ENCODE measurements at regions of chr6 and their contacts with region 1.

Region 1: GRCh38 chr6:116570856-116571682 is at the start of gene RWDD1:
- DNase-seq: peak; percentile 91 to 99 (median 98)
- ATAC-seq: peak; percentile 98
- H3K4me3 ChIP-seq: peak within 1 kb of the TSS; percentile 86
- H3K4me3 Mint-ChIP-seq: peak within 1 kb of the TSS; percentile 94 to 99 (median 98)
- H3K27ac ChIP-seq: peak within 1 kb of the TSS; percentile 95
- H3K27ac Mint-ChIP-seq: peak within 1 kb of the TSS; percentile 96 to 100 (median 99)
- H3K4me1 ChIP-seq: peaks cover 16 to 21% of the 10 kb centered on the region in 2 donors
- H3K4me1 Mint-ChIP-seq: peaks cover 33 to 62% (median 55%) of the 10 kb centered on the region in 7 donors
- H3K27me3 ChIP-seq: no peaks in the 10 kb centered on the region
- H3K27me3 Mint-ChIP-seq: peaks cover 0 to 11% (median 0%) of the 10 kb centered on the region in 5 donors
- total RNA-seq, gene RWDD1: 33.2 to 39.9 (median 36.7) TPM

Region 2: GRCh38 chr6:116461932-116462885 is 108.9 kb before region 1 on chr6:
- CTCF ChIA-PET with region 1: no interaction called
- POLR2A ChIA-PET with region 1: interaction called, 3 read pairs
- intact Hi-C with region 1: loop called in 1 of 2 experiments (anchors 1 kb)
- DNase-seq: peak; percentile 25 to 71 (median 62)
- ATAC-seq: peak; percentile 89
- H3K4me3 ChIP-seq: peak overlapping the region; percentile 58
- H3K4me3 Mint-ChIP-seq: peak overlapping the region; percentile 76 to 87 (median 80)
- H3K27ac ChIP-seq: no peak overlapping the region
- H3K27ac Mint-ChIP-seq: peak overlapping the region in 7 of 9 donors; percentile 33 to 92 (median 76)
- H3K4me1 ChIP-seq: peaks cover 7 to 16% of the 10 kb centered on the region in 2 donors
- H3K4me1 Mint-ChIP-seq: peaks cover 17 to 88% (median 26%) of the 10 kb centered on the region in 7 donors
- H3K27me3 ChIP-seq: no peaks in the 10 kb centered on the region
- H3K27me3 Mint-ChIP-seq: peaks cover 0 to 39% (median 4%) of the 10 kb centered on the region in 5 donors

Region 3: DNA sequence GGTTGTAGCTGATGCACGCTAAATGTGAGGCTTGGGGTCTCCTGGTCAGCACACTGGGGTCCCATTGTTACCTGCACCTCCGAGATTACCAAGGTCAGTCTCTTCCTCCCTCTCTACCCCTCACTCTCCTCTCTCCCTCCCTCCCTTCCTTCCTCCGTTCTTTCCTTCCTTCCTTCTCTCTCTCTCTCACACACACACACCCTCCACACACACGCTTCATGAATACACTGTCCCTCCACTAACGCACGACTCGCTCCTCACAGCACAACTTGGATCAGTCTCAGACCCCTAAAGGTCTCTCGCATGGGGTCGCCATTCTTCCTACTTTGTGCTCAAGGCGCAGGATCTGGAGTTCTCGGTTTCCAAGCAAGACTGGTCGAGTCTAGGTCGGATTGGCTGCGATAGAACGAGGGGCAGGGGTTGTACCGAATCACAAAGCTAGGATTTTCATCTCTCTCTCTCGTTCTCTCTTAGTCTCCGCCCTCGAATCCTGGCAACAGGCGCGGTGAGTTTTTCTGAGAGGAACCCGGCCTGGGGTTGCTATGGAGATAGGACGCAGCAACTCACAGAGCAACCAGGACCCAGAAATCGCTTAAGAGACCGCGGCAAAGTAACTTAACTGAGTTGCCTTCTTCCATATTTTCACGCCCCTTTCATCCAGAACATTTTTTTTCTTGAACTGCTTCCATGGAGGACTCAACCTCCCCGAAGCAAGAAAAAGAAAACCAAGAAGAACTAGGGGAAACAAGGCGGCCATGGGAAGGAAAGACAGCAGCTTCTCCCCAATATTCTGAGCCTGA is 45.1 kb after region 1 on chr6 and contains the start of gene RSPH4A:
- CTCF ChIA-PET with region 1: no interaction called
- POLR2A ChIA-PET with region 1: interaction called, 4 read pairs
- intact Hi-C with region 1: loop called (anchors 1 kb)
- DNase-seq: peak; percentile 17 to 76 (median 61)
- ATAC-seq: peak; percentile 95
- H3K4me3 ChIP-seq: peak within 1 kb of the TSS; percentile 78
- H3K4me3 Mint-ChIP-seq: peak within 1 kb of the TSS; percentile 81 to 94 (median 86)
- H3K27ac ChIP-seq: peak within 1 kb of the TSS; percentile 28
- H3K27ac Mint-ChIP-seq: peak within 1 kb of the TSS in 8 of 9 donors; percentile 4 to 78 (median 38)
- H3K4me1 ChIP-seq: peaks cover 5 to 6% of the 10 kb centered on the region in 2 donors
- H3K4me1 Mint-ChIP-seq: peaks cover 6 to 22% (median 16%) of the 10 kb centered on the region in 7 donors
- H3K27me3 ChIP-seq: no peaks in the 10 kb centered on the region
- H3K27me3 Mint-ChIP-seq: peaks cover 0 to 54% (median 14%) of the 10 kb centered on the region in 5 donors
- total RNA-seq, gene RSPH4A: 0.53 to 1.3 (median 0.73) TPM

Region 4: DNA sequence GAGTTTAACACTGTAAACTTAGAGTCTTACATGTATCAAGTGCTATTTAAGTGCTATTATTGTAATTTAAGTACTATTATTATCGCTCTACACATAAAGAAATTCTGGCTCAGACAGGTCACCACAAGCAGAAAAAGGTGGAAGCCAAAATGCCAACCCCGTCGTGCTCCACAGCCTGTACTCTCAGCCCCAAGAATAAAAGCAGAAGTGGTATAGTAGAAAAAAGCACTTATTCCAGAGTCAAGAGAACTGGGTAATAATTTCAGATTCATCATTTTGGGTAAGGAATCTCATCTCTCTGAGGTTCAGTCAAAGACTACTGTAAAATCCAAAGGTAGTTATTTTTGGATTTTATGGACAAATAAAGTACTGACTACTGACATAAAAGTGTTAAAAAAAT is 96.6 kb after region 1 on chr6:
- CTCF ChIA-PET with region 1: no interaction called
- POLR2A ChIA-PET with region 1: interaction called, 8 read pairs
- intact Hi-C with region 1: loop called (anchors 1 kb)
- DNase-seq: no peak
- ATAC-seq: no peak
- H3K4me3 ChIP-seq: peak overlapping the region; percentile 92
- H3K4me3 Mint-ChIP-seq: peak overlapping the region; percentile 90 to 100 (median 98)
- H3K27ac ChIP-seq: peak overlapping the region; percentile 91
- H3K27ac Mint-ChIP-seq: peak overlapping the region; percentile 44 to 100 (median 98)
- H3K4me1 ChIP-seq: peaks cover 17 to 24% of the 10 kb centered on the region in 2 donors
- H3K4me1 Mint-ChIP-seq: peaks cover 29 to 55% (median 45%) of the 10 kb centered on the region in 7 donors
- H3K27me3 ChIP-seq: no peaks in the 10 kb centered on the region
- H3K27me3 Mint-ChIP-seq: peaks cover 0 to 15% (median 0%) of the 10 kb centered on the region in 5 donors